A673 (cell line): ENCODE measurements at regions of chr14 and their contacts with region 1.

Region 1: DNA sequence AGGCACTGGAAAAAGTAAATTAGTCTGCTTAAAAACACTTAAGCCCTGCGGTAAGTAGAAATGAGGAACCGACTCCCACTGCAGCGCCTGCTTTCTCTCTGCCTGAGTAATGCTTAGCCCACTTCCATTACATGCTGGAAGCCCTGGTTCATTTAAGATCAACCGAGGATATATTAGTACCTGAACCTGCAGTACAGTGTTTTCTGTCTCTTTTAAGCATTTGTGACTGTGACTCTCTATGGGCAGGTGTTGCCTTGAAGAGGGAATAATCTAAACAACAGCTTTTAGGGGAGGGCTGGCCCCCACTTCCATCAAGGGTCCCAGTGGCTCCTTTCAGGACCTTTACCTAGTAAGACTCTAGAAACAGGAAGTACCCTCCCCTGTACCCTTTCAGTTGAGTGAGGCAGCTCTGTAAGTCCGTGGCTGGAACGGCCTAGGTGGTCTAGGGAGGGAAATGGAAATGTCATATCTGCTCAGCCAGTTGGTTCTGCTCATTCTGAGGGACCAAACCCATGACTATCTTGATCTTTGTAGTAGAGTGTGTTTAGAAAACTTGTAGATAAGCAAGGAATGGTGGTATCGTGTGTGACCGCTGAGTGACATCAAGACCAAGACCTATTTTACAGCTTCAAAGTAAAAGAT is 56.2 kb downstream of the FNTB start:
- DNase-seq: no peak
- H3K4me3 ChIP-seq: no peak overlapping the region
- H3K27ac ChIP-seq: no peak overlapping the region
- H3K4me1 ChIP-seq: peaks cover 6% of the 10 kb centered on the region
- H3K27me3 ChIP-seq: no peaks in the 10 kb centered on the region
- CTCF ChIP-seq: no peak

Region 2: DNA sequence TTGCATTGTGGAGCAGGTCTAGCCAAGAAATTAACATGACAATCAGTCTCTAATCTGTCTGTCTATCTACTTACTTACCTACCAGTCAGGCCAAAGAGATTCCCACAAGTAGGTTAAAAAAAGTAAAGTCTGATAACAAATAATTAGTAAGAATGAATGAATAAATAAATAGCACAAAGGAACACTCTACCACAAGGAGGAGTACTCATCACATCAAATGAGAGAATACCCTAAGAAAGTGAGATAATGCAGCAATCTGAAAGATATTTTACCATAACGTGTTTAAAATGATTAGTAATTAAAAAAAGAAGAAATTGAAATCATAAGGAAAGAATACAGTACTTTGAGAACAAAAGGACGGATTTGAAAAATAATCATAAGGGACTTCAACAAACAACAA is 1002.8 kb before region 1 on chr14:
- CTCF ChIA-PET with region 1: no interaction called
- POLR2A ChIA-PET with region 1: no interaction called
- intact Hi-C with region 1: no loop called
- DNase-seq: no peak
- H3K4me3 ChIP-seq: no peak overlapping the region
- H3K27ac ChIP-seq: no peak overlapping the region
- H3K4me1 ChIP-seq: no peaks in the 10 kb centered on the region
- H3K27me3 ChIP-seq: no peaks in the 10 kb centered on the region
- CTCF ChIP-seq: peak; percentile 40; the same call in 1 of the 2 replicates

Region 3: GRCh38 chr14:65506809-65507208 is 464.0 kb after region 1 on chr14:
- CTCF ChIA-PET with region 1: no interaction called
- POLR2A ChIA-PET with region 1: interaction called, 12 read pairs
- intact Hi-C with region 1: no loop called
- DNase-seq: no peak
- H3K4me3 ChIP-seq: no peak overlapping the region
- H3K27ac ChIP-seq: no peak overlapping the region
- H3K4me1 ChIP-seq: no peaks in the 10 kb centered on the region
- H3K27me3 ChIP-seq: no peaks in the 10 kb centered on the region
- CTCF ChIP-seq: no peak